Common myeloid progenitor, CD34-positive (primary cell): ENCODE measurements at regions of chr6 and their contacts with region 1.

Region 1: GRCh38 chr6:43774776-43775534 is 4.9 kb downstream of the VEGFA start:
- DNase-seq: peak; percentile 64 to 81 (median 78)
- H3K4me3 ChIP-seq: peak overlapping the region in 5 of 7 experiments; percentile 1 to 62 (median 11)
- H3K27ac ChIP-seq: peak overlapping the region in 1 of 2 experiments; percentile 17
- H3K4me1 ChIP-seq: peaks cover 2 to 64% (median 49%) of the 10 kb centered on the region in 4 experiments
- H3K27me3 ChIP-seq: peaks cover 0 to 30% (median 0%) of the 10 kb centered on the region in 5 experiments

Region 2: GRCh38 chr6:43308101-43308989 is 466.6 kb before region 1 on chr6 and contains the start of gene CRIP3:
- CTCF ChIA-PET with region 1: no interaction called
- POLR2A ChIA-PET with region 1: no interaction called
- DNase-seq: peak; percentile 61 to 79 (median 73)
- H3K4me3 ChIP-seq: peak within 1 kb of the TSS; percentile 10 to 74 (median 32)
- H3K27ac ChIP-seq: no peak within 1 kb of the TSS
- H3K4me1 ChIP-seq: peaks cover 22 to 43% (median 26%) of the 10 kb centered on the region in 4 experiments
- H3K27me3 ChIP-seq: peaks cover 0 to 8% (median 0%) of the 10 kb centered on the region in 5 experiments

Region 3: GRCh38 chr6:43723737-43724295 is 51.1 kb before region 1 on chr6:
- CTCF ChIA-PET with region 1: interaction called, 15 read pairs
- POLR2A ChIA-PET with region 1: interaction called, 7 read pairs
- DNase-seq: peak; percentile 79 to 87 (median 81)
- H3K4me3 ChIP-seq: no peak overlapping the region
- H3K27ac ChIP-seq: no peak overlapping the region
- H3K4me1 ChIP-seq: peaks cover 4 to 29% (median 27%) of the 10 kb centered on the region in 4 experiments
- H3K27me3 ChIP-seq: peaks cover 0 to 7% (median 0%) of the 10 kb centered on the region in 5 experiments

Region 4: GRCh38 chr6:43790025-43790523 is 15.1 kb after region 1 on chr6:
- CTCF ChIA-PET with region 1: interaction called, 16 read pairs
- POLR2A ChIA-PET with region 1: no interaction called
- DNase-seq: peak in 1 of 3 donors; percentile 24
- H3K4me3 ChIP-seq: no peak overlapping the region
- H3K27ac ChIP-seq: no peak overlapping the region
- H3K4me1 ChIP-seq: peaks cover 0 to 6% (median 4%) of the 10 kb centered on the region in 4 experiments
- H3K27me3 ChIP-seq: no peaks in the 10 kb centered on the region

Region 5: GRCh38 chr6:43803783-43804549 is 29.0 kb after region 1 on chr6:
- CTCF ChIA-PET with region 1: interaction called, 68 read pairs
- POLR2A ChIA-PET with region 1: interaction called, 3 read pairs
- DNase-seq: peak in 2 of 3 donors; percentile 46
- H3K4me3 ChIP-seq: no peak overlapping the region
- H3K27ac ChIP-seq: peak overlapping the region in 1 of 2 experiments; percentile 18
- H3K4me1 ChIP-seq: peaks cover 14 to 79% (median 55%) of the 10 kb centered on the region in 4 experiments
- H3K27me3 ChIP-seq: no peaks in the 10 kb centered on the region

Region 6: DNA sequence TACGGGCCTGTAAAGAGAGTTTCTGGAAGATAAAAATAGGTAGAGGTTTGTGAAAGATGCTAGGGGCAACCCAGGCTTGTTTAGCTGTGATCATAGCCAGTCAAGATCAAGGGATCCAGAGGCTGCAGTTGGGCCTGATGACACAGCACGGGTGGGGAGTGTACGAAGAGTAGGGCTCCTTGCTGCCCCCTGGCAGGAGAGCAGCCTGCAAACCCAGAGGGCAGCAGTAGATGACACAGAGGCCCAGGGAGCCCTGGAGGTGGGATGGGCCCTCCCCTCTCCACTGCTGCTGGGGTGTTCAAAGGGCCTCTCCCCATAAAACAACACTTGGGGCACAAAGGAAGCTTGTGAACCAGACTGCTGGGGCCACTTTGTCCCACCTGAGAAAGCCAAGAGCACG is 42.2 kb after region 1 on chr6:
- CTCF ChIA-PET with region 1: interaction called, 51 read pairs
- POLR2A ChIA-PET with region 1: no interaction called
- DNase-seq: peak; percentile 76 to 84 (median 84)
- H3K4me3 ChIP-seq: no peak overlapping the region
- H3K27ac ChIP-seq: no peak overlapping the region
- H3K4me1 ChIP-seq: peaks cover 3 to 42% (median 27%) of the 10 kb centered on the region in 4 experiments
- H3K27me3 ChIP-seq: no peaks in the 10 kb centered on the region

Region 7: GRCh38 chr6:43951063-43951755 is 176.3 kb after region 1 on chr6:
- CTCF ChIA-PET with region 1: interaction called, 22 read pairs
- POLR2A ChIA-PET with region 1: no interaction called
- DNase-seq: peak; percentile 63 to 77 (median 75)
- H3K4me3 ChIP-seq: no peak overlapping the region
- H3K27ac ChIP-seq: no peak overlapping the region
- H3K4me1 ChIP-seq: peaks cover 0 to 5% (median 0%) of the 10 kb centered on the region in 4 experiments
- H3K27me3 ChIP-seq: peaks cover 0 to 2% (median 0%) of the 10 kb centered on the region in 5 experiments

Region 8: GRCh38 chr6:44074439-44075136 is 299.6 kb after region 1 on chr6:
- CTCF ChIA-PET with region 1: interaction called, 46 read pairs
- POLR2A ChIA-PET with region 1: no interaction called
- DNase-seq: peak; percentile 74 to 85 (median 80)
- H3K4me3 ChIP-seq: peak overlapping the region in 1 of 7 experiments; percentile 61
- H3K27ac ChIP-seq: peak overlapping the region in 1 of 2 experiments; percentile 73
- H3K4me1 ChIP-seq: peaks cover 3 to 31% (median 25%) of the 10 kb centered on the region in 4 experiments
- H3K27me3 ChIP-seq: peaks cover 0 to 43% (median 17%) of the 10 kb centered on the region in 5 experiments